SK-N-SH (cell line): ENCODE measurements at regions of chr1 and their contacts with region 1.

Region 1: GRCh38 chr1:85502625-85503083 is 37.7 kb upstream of the DDAH1 start:
- DNase-seq: peak; percentile 48
- H3K4me3 ChIP-seq: no peak overlapping the region
- H3K27ac ChIP-seq: peak overlapping the region in 1 of 2 experiments; percentile 62; a peak in 1 of 4 replicates
- H3K4me1 ChIP-seq: peaks cover 9 to 14% of the 10 kb centered on the region in 2 experiments
- H3K27me3 ChIP-seq: no peaks in the 10 kb centered on the region
- CTCF ChIP-seq: peak; percentile 58
- EP300 ChIP-seq: no peak
- RAD21 ChIP-seq: peak; percentile 74

Region 2: GRCh38 chr1:85344256-85344694 is 158.4 kb before region 1 on chr1:
- CTCF ChIA-PET with region 1: interaction called, 10 read pairs
- POLR2A ChIA-PET with region 1: no interaction called
- DNase-seq: peak; percentile 42
- H3K4me3 ChIP-seq: no peak overlapping the region
- H3K27ac ChIP-seq: peak overlapping the region; percentile 70 to 98; a peak in 3 of 4 replicates
- H3K4me1 ChIP-seq: peaks cover 2 to 58% of the 10 kb centered on the region in 2 experiments
- H3K27me3 ChIP-seq: no peaks in the 10 kb centered on the region
- CTCF ChIP-seq: peak; percentile 82
- EP300 ChIP-seq: no peak
- RAD21 ChIP-seq: peak; percentile 65

Region 3: DNA sequence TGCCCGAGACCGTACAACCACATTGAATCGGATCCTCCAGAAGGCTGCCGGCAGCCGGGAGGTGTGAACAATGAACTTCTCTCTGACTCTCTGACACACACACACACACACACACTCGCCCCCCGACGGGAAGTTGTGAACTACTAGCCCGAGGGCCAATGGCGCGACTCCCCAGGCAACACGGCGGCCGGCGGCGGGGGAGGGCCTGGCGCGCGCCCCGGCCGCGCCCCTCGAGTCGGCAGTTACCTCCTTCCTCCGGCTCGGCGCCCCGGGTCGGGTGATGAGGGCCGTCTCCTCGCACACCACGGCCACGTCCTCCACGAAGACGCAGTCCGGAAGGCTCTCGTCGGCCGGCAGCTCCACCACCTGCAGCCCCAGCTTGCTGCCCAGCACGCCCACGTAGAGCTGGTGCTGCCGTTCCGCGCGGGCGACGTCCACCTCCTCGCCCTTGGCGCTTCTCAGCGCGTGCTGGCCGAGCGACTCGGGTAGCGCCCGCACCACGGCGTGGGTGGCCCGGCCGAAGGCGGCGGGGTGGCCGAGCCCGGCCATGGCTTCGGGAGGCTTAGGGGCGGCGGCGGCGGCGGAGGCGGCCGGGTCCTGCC is 38.1 kb before region 1 on chr1:
- CTCF ChIA-PET with region 1: interaction called, 12 read pairs
- POLR2A ChIA-PET with region 1: interaction called, 3 read pairs
- DNase-seq: peak; percentile 81
- H3K4me3 ChIP-seq: peak overlapping the region; percentile 80
- H3K27ac ChIP-seq: peak overlapping the region; percentile 88 to 96
- H3K4me1 ChIP-seq: peaks cover 22 to 36% of the 10 kb centered on the region in 2 experiments; a peak in 3 of 4 replicates
- H3K27me3 ChIP-seq: no peaks in the 10 kb centered on the region
- CTCF ChIP-seq: no peak; the same call in 1 of the 2 replicates
- EP300 ChIP-seq: no peak
- RAD21 ChIP-seq: no peak; the same call in 1 of the 2 replicates